Transverse colon (tissue), 4 donors: ENCODE measurements at regions of chr12 and their contacts with region 1.

Region 1: GRCh38 chr12:109804820-109805761 is 28.1 kb downstream of the TRPV4 start:
- DNase-seq: peak; percentile 72
- H3K4me3 ChIP-seq: no peak overlapping the region
- H3K27ac ChIP-seq: no peak overlapping the region
- H3K4me1 ChIP-seq: no peaks in the 10 kb centered on the region
- H3K27me3 ChIP-seq: no peaks in the 10 kb centered on the region
- CTCF ChIP-seq: peak; percentile 92 to 98 (median 98)
- EP300 ChIP-seq: no peak
- POLR2A ChIP-seq: no peak

Region 2: GRCh38 chr12:108611884-108612415 is 1193.1 kb before region 1 on chr12:
- in situ Hi-C with region 1: no loop called
- intact Hi-C with region 1: no loop called
- DNase-seq: no peak
- H3K4me3 ChIP-seq: no peak overlapping the region
- H3K27ac ChIP-seq: no peak overlapping the region
- H3K4me1 ChIP-seq: peaks cover 0 to 9% (median 0%) of the 10 kb centered on the region in 4 donors
- H3K27me3 ChIP-seq: no peaks in the 10 kb centered on the region
- CTCF ChIP-seq: peak; percentile 22 to 33 (median 32)
- EP300 ChIP-seq: no peak
- POLR2A ChIP-seq: no peak

Region 3: GRCh38 chr12:109518820-109519665 is 286.0 kb before region 1 on chr12:
- in situ Hi-C with region 1: no loop called
- intact Hi-C with region 1: no loop called
- DNase-seq: peak; percentile 59
- H3K4me3 ChIP-seq: no peak overlapping the region
- H3K27ac ChIP-seq: peak overlapping the region; percentile 30 to 55 (median 48)
- H3K4me1 ChIP-seq: no peaks in the 10 kb centered on the region
- H3K27me3 ChIP-seq: no peaks in the 10 kb centered on the region
- CTCF ChIP-seq: peak; percentile 68 to 85 (median 78)
- EP300 ChIP-seq: no peak
- POLR2A ChIP-seq: no peak

Region 4: GRCh38 chr12:109697877-109698468 is 107.1 kb before region 1 on chr12:
- in situ Hi-C with region 1: no loop called
- intact Hi-C with region 1: no loop called
- DNase-seq: no peak
- H3K4me3 ChIP-seq: no peak overlapping the region
- H3K27ac ChIP-seq: no peak overlapping the region
- H3K4me1 ChIP-seq: peaks cover 8 to 11% (median 9%) of the 10 kb centered on the region in 4 donors
- H3K27me3 ChIP-seq: no peaks in the 10 kb centered on the region
- CTCF ChIP-seq: no peak
- EP300 ChIP-seq: no peak
- POLR2A ChIP-seq: no peak

Region 5: GRCh38 chr12:109844983-109845823 is 40.1 kb after region 1 on chr12:
- in situ Hi-C with region 1: no loop called
- intact Hi-C with region 1: loop called (anchors 1 kb)
- DNase-seq: peak; percentile 91
- H3K4me3 ChIP-seq: peak overlapping the region in 1 of 4 donors; percentile 35
- H3K27ac ChIP-seq: no peak overlapping the region
- H3K4me1 ChIP-seq: peaks cover 3 to 10% (median 7%) of the 10 kb centered on the region in 4 donors
- H3K27me3 ChIP-seq: no peaks in the 10 kb centered on the region
- CTCF ChIP-seq: peak; percentile 96 to 99 (median 99)
- EP300 ChIP-seq: no peak
- POLR2A ChIP-seq: no peak

Region 6: DNA sequence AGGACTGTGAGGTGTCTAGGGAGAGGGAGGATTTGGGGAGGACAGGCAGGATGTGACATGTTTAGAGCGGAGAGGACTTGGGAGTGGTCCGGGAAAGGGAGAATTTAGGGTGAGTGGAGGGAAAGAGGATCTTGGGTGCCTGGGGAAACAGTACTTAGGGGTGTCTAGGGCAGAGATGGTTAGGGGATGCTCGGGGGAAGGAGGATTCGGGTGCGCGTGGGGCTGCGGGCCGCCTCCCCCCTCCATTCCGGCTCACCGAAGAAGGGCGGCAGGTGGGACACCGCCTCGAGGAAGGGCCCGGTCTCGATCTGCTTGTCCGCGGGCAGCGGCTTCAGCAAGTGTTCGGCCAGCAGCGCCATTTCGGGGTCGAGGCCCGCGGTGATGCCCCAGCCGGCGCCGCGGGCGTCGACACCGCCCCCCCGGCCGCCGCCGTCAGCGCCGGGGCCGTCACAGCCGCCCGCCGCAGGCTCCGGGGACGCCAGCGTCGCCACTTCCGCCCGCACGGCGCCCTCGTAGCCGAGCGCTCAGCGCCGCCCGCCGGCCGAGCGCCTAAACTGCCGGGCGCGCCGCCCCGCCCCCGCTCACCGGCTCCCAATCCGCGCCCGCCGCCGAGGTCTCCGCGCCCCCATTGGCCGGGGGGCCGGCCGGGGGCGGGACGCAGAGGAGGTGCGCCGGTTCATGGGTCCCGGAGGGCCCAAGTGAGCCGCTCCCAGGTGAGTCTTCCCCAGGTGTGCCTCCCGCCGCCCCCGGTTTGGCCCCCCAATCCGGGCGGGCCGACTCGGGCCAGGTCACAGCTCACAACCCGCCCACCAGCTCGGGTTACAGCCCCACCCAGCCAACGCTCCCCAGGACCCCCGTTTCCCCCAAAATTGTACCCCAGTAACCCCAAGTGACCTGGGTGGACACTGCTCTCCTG is 75.2 kb after region 1 on chr12 and contains the start of gene GLTP:
- in situ Hi-C with region 1: loop called in 2 of 4 experiments (anchors 10 kb)
- intact Hi-C with region 1: loop called (anchors 1 kb)
- DNase-seq: peak; percentile 90
- H3K4me3 ChIP-seq: peak within 1 kb of the TSS; percentile 66 to 92 (median 85)
- H3K27ac ChIP-seq: peak within 1 kb of the TSS; percentile 83 to 89 (median 84)
- H3K4me1 ChIP-seq: peaks cover 22 to 50% (median 35%) of the 10 kb centered on the region in 4 donors
- H3K27me3 ChIP-seq: no peaks in the 10 kb centered on the region
- CTCF ChIP-seq: peak in 3 of 5 experiments; percentile 29 to 55 (median 44)
- EP300 ChIP-seq: no peak
- POLR2A ChIP-seq: peak; percentile 17
- total RNA-seq, gene GLTP: 35.6 to 287 (median 167) TPM

Region 7: GRCh38 chr12:109900752-109901580 is 95.9 kb after region 1 on chr12:
- in situ Hi-C with region 1: no loop called
- intact Hi-C with region 1: no loop called
- DNase-seq: no peak
- H3K4me3 ChIP-seq: peak overlapping the region; percentile 68 to 90 (median 80)
- H3K27ac ChIP-seq: peak overlapping the region; percentile 78 to 87 (median 82)
- H3K4me1 ChIP-seq: peaks cover 4 to 24% (median 16%) of the 10 kb centered on the region in 4 donors
- H3K27me3 ChIP-seq: no peaks in the 10 kb centered on the region
- CTCF ChIP-seq: no peak
- EP300 ChIP-seq: no peak
- POLR2A ChIP-seq: no peak